ENCODE measurements at regions of chr11 and their contacts with region 1.

Region 1: GRCh38 chr11:107689317-107690202 is 22.3 kb downstream of the SLN start:
- DNase-seq: no peak
- H3K4me3 ChIP-seq: no peak overlapping the region
- H3K27ac ChIP-seq: no peak overlapping the region
- H3K4me1 ChIP-seq: peaks cover 0 to 6% (median 3%) of the 10 kb centered on the region in 6 donors
- H3K27me3 ChIP-seq: peaks cover 0 to 29% (median 0%) of the 10 kb centered on the region in 7 donors
- CTCF ChIP-seq: peak in 9 of 11 experiments; percentile 36 to 63 (median 57)
- POLR2A ChIP-seq: no peak

Region 2: GRCh38 chr11:107562647-107563208 is 126.8 kb before region 1 on chr11:
- intact Hi-C with region 1: no loop called
- DNase-seq: no peak
- H3K4me3 ChIP-seq: no peak overlapping the region
- H3K27ac ChIP-seq: no peak overlapping the region
- H3K4me1 ChIP-seq: peaks cover 16 to 42% (median 30%) of the 10 kb centered on the region in 6 donors
- H3K27me3 ChIP-seq: no peaks in the 10 kb centered on the region
- CTCF ChIP-seq: no peak
- POLR2A ChIP-seq: no peak

Region 3: GRCh38 chr11:107573438-107573837 is 116.1 kb before region 1 on chr11:
- intact Hi-C with region 1: loop called (anchors 10 kb)
- DNase-seq: no peak
- H3K4me3 ChIP-seq: no peak overlapping the region
- H3K27ac ChIP-seq: no peak overlapping the region
- H3K4me1 ChIP-seq: no peaks in the 10 kb centered on the region
- H3K27me3 ChIP-seq: no peaks in the 10 kb centered on the region
- CTCF ChIP-seq: no peak
- POLR2A ChIP-seq: no peak

Measured in spleen (tissue), 13 donors.